Dendritic cell treated with granulocyte-macrophage colony-stimulating factor and Interleukin-4, amounts not matched to agents 40 ng/mL and 50 ng/mL, for 4 days (primary cell): ENCODE measurements at regions of chr15 and their contacts with region 1.

Region 1: DNA sequence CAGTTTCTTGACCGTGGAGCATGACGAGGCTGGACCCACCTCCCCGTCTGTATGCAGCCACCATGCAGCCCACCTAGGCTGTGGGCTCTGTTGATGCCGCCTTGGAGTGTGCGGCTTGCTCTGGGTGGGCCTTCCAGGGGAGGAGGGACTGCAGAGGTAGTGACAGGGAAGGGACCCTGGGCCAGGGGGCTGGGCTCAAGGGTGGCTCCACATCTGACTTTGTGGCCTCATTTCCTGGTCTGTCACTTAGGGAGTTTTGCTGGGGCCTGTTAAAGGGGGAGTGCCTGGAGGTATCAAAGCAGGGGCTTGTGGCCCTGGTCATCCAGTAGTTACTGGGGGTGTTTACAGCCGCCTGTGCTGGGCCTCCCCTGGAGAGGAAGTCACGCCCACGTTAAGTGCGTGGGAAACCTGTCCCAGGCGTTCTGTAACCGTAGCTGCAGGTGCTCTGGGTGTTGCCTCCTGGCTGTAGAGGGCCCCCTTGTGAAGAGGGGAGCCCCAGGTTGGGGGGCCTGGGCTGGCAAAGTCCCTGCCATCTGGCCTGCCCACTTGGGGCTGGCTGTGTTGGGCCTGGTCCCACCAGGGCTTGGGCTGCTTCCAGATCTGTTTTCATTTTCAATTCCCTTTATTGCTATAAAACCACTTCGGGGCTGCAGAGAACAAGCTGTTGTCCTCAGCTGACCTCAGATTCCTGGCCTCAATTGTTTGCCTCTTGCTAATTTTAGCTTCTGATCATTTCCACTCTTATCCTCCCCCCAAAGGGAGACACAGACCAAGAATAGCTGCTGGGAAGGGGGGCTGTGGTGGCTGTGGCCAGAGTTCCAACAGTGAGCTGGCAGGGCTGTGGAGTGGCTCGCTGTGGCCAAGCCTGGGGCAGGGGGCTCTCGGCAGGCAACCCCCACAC is 26.5 kb downstream of the KLF13 start:
- H3K4me3 Mint-ChIP-seq: peak overlapping the region; percentile 67
- H3K27ac Mint-ChIP-seq: peak overlapping the region; percentile 85
- H3K4me1 Mint-ChIP-seq: peaks cover 99% of the 10 kb centered on the region
- H3K27me3 Mint-ChIP-seq: no peaks in the 10 kb centered on the region

Region 2: DNA sequence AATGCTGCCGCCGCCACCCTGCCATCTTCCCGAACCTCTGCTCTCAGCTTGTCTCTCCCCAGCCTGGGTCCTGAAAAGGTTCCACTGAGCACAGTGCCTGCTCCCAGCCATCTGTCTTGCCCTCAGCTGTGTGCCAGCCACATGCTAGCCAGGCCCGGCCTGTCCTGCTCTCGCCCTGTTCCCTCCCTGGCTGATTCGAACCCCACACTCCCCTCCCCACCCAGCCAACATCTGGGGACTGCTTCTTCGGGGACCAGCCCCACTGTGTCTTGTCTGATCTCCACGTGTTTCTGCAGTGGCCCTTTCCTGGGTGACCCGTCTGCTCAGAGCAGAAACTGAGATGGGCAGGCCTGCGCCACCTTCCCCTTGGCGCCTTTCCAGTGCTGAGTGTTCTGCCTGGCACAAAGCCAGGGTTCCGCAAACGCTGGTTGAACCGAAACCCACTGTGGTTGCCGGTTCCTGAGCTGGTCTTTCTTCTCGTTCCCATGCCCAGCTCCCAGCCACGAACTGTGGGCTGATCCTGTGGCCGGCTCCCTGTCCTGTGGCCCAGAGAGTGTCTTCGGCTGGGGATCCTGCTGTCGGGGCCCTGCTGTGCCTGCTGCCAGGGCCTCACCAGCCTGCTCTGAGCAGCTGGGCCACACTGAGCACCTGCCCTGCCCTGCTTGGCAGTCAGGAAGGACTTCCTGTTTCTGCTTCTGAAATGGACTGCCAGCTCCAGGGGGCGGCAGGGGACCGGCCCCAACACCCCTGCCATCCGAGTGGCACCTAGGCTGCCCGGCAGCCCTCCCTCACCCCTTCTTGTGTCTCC is 89.2 kb before region 1 on chr15:
- intact Hi-C with region 1: no loop called
- H3K4me3 Mint-ChIP-seq: peak overlapping the region; percentile 17
- H3K27ac Mint-ChIP-seq: peak overlapping the region; percentile 95
- H3K4me1 Mint-ChIP-seq: peaks cover 100% of the 10 kb centered on the region
- H3K27me3 Mint-ChIP-seq: no peaks in the 10 kb centered on the region

Region 3: DNA sequence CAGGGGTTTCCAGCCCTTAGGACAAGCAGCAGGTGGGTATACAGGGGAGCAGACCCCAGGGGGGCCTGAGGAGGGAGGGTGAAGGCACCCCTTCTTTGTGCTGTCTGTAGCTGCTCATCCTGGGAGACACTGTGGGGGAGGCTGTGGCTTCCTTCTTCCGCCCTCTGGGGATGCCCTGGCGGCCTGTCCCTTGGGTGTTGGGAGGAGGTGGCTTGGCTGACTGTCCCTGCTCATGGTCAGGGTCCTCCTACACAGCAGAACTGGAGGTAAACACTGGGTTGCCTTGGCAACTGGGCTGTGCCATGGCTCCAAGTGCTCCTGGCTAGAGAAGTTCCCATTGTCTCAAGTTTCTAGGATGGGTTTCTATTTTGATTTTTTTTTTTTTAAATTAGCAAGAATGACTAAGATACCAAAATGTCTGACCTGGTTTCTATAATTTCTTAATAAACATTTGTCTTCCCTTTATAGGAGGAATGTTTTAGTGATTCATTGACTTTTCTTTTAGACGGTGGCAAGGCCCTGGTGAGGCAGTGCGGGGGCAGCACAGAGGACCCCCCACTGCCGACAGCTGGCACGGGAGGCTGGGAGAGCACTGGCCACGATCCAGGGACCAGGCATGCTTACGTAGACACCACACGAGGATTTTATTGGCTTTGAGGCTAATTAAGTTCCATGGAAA is 14.1 kb before region 1 on chr15:
- intact Hi-C with region 1: loop called (anchors 2 kb)
- H3K4me3 Mint-ChIP-seq: peak overlapping the region; percentile 32
- H3K27ac Mint-ChIP-seq: peak overlapping the region; percentile 75
- H3K4me1 Mint-ChIP-seq: peaks cover 98% of the 10 kb centered on the region
- H3K27me3 Mint-ChIP-seq: no peaks in the 10 kb centered on the region

Region 4: GRCh38 chr15:31387479-31388118 is 34.4 kb after region 1 on chr15:
- intact Hi-C with region 1: no loop called
- H3K4me3 Mint-ChIP-seq: no peak overlapping the region
- H3K27ac Mint-ChIP-seq: no peak overlapping the region
- H3K4me1 Mint-ChIP-seq: peaks cover 6% of the 10 kb centered on the region
- H3K27me3 Mint-ChIP-seq: peaks cover 15% of the 10 kb centered on the region

Region 5: GRCh38 chr15:31488426-31489204 is 135.5 kb after region 1 on chr15:
- intact Hi-C with region 1: no loop called
- H3K4me3 Mint-ChIP-seq: no peak overlapping the region
- H3K27ac Mint-ChIP-seq: peak overlapping the region; percentile 15
- H3K4me1 Mint-ChIP-seq: peaks cover 25% of the 10 kb centered on the region
- H3K27me3 Mint-ChIP-seq: peaks cover 45% of the 10 kb centered on the region